PC-9 (cell line): ENCODE measurements at regions of chr3 and their contacts with region 1.

Region 1: GRCh38 chr3:194671900-194672808 is at the start of gene LSG1:
- DNase-seq: peak; percentile 71 to 93
- H3K4me3 ChIP-seq: peak within 1 kb of the TSS; percentile 99
- H3K27ac ChIP-seq: peak within 1 kb of the TSS; percentile 88
- H3K4me1 ChIP-seq: peaks cover 13% of the 10 kb centered on the region; the same call in 1 of the 2 replicates
- H3K27me3 ChIP-seq: no peaks in the 10 kb centered on the region
- CTCF ChIP-seq: no peak
- total RNA-seq, gene LSG1: 59.2 and 71.8 TPM in 2 replicates

Region 2: GRCh38 chr3:194761384-194761783 is 89.2 kb after region 1 on chr3:
- CTCF ChIA-PET with region 1: no interaction called
- POLR2A ChIA-PET with region 1: no interaction called
- intact Hi-C with region 1: no loop called
- DNase-seq: peak; percentile 61 to 72
- H3K4me3 ChIP-seq: no peak overlapping the region
- H3K27ac ChIP-seq: no peak overlapping the region
- H3K4me1 ChIP-seq: peaks cover 15% of the 10 kb centered on the region; the same call in 1 of the 2 replicates
- H3K27me3 ChIP-seq: no peaks in the 10 kb centered on the region
- CTCF ChIP-seq: no peak

Region 3: GRCh38 chr3:195187609-195188425 is 515.7 kb after region 1 on chr3:
- CTCF ChIA-PET with region 1: no interaction called
- POLR2A ChIA-PET with region 1: no interaction called
- intact Hi-C with region 1: loop called (anchors 5 kb)
- DNase-seq: no peak
- H3K4me3 ChIP-seq: no peak overlapping the region
- H3K27ac ChIP-seq: no peak overlapping the region
- H3K4me1 ChIP-seq: peaks cover 23% of the 10 kb centered on the region
- H3K27me3 ChIP-seq: no peaks in the 10 kb centered on the region
- CTCF ChIP-seq: no peak

Region 4: GRCh38 chr3:195259475-195260279 is 587.5 kb after region 1 on chr3:
- CTCF ChIA-PET with region 1: interaction called, 3 read pairs
- POLR2A ChIA-PET with region 1: no interaction called
- intact Hi-C with region 1: loop called (anchors 1 kb)
- DNase-seq: peak; percentile 86 to 96
- H3K4me3 ChIP-seq: peak overlapping the region; percentile 70
- H3K27ac ChIP-seq: peak overlapping the region; percentile 74
- H3K4me1 ChIP-seq: peaks cover 13% of the 10 kb centered on the region
- H3K27me3 ChIP-seq: no peaks in the 10 kb centered on the region
- CTCF ChIP-seq: no peak

Region 5: DNA sequence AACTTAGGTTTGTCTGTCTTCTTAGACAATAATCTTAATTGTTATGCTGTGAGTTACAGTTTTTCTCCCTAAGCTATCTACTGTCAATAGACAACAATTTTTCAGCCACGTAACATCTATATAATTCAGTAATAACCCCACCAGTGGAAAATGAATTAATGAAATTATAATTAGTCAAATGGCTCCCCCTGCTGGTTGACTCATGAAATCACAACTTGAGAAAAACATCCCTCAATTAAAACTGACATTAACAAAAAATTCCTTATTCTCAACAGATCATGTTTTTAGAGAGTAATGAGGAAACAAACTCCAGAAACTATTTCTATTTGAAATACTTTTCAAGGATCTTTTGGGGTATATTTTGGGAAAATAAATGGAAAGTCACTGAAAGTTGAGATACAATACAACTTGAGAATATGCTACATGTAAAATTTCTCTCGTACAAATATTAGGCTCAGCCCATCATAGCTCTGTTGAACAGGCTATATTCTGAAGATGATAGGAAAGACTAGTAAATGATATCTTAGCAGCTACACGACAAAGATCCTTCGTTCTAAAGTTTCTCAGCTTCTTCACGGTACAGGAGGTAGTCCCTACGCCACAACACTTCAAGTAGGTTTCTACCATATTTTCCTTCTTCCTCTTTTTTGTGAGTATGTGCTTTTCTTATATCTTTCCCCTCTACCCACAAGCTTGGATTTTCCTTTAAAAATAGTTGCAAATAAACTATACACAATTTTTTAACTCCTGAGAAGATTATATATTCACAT is 850.3 kb after region 1 on chr3:
- CTCF ChIA-PET with region 1: no interaction called
- POLR2A ChIA-PET with region 1: no interaction called
- intact Hi-C with region 1: loop called (anchors 1 kb)
- DNase-seq: peak in 1 of 2 experiments; percentile 46
- H3K4me3 ChIP-seq: no peak overlapping the region
- H3K27ac ChIP-seq: no peak overlapping the region
- H3K4me1 ChIP-seq: no peaks in the 10 kb centered on the region
- H3K27me3 ChIP-seq: no peaks in the 10 kb centered on the region
- CTCF ChIP-seq: peak; percentile 98